Pancreas (tissue), 10 donors: ENCODE measurements at regions of chr17 and their contacts with region 1.

Region 1: DNA sequence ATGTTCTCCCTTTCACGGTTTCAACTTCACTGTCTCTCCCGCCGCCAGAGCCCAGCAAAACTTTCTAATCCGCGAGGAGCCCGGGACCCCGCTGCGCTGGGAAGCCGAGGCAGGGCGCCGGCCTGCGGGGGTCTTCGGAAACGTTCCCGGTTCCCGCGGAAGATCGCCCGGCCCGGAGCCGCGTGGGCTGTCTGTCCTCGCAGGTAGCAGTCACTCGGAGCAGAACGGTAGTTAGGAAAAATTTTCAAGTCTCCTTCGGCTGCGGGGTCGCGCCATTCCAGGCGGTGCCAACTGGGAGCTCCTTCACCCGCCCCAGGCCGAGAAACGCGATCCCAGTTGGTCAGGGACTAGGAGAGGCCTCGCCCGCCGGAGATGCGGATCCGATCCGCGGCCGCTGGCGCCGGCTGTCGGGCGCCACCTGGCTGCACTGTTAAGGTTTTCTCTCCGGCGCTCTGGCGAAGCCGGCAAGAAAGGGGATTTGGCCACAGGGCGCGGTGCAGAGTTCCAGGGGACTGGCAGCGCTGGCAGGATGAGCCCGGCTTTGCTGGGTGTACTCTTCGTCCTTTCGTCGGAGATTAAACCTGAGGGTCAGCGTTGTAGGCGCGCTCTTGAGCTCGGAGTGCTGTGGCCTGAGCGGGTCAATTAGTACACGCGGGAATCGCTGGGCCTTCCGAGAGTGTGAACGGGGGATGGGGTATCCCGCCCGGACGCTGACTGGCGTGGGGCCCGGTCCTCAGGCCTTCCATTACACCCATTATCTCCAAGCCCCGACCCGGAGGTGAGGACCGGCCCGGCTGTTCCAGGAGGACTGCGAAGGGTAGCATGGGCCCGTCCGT is 135.4 kb downstream of the KCNJ12 start:
- DNase-seq: peak; percentile 69 to 92 (median 82)
- ATAC-seq: peak; percentile 94 to 98 (median 97)
- H3K4me3 ChIP-seq: peak overlapping the region; percentile 21 to 54 (median 32)
- H3K27ac ChIP-seq: peak overlapping the region in 3 of 4 donors; percentile 29 to 41 (median 39)
- H3K4me1 ChIP-seq: no peaks in the 10 kb centered on the region
- H3K27me3 ChIP-seq: peaks cover 0 to 3% (median 0%) of the 10 kb centered on the region in 4 donors
- CTCF ChIP-seq: peak; percentile 68 to 81 (median 76)

Region 2: DNA sequence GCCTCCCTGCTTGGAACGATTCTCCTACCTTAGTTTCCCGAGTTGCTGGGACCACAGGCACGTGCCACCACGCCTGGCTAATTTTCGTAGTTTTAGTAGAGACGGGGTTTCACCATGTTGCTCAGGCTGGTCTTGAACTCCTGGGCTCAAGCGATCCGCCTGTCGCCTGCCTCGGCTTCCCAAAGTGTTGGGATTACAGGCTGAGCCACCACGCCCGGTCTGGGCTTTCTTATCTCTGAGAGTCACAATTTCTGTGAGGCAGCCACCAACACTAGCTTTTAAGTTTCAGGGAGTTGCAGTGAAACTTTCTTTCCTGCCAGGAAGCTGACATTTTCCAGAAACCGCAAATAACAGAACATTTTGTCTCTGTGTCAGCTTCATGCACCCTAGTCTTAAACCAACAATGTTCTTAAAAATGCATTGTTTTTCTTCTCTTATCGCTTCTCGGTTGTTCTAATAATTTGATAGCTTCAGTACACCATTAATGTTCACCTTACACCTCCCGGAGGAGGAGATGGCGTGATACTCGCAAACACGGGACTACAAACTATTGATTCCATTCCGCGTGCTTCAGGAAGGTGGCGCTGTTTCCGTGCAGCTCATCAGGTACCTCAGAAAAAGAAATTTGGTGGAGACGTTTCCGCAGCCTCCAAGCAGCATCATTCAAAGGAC is 392.2 kb before region 1 on chr17:
- intact Hi-C with region 1: loop called in 1 of 3 experiments (anchors 10 kb)
- DNase-seq: peak in 5 of 6 donors; percentile 47 to 74 (median 57)
- ATAC-seq: peak; percentile 66 to 96 (median 92)
- H3K4me3 ChIP-seq: no peak overlapping the region
- H3K27ac ChIP-seq: peak overlapping the region in 1 of 4 donors; percentile 46
- H3K4me1 ChIP-seq: peaks cover 0 to 4% (median 0%) of the 10 kb centered on the region in 3 donors
- H3K27me3 ChIP-seq: no peaks in the 10 kb centered on the region
- CTCF ChIP-seq: peak; percentile 59 to 83 (median 76)

Region 3: GRCh38 chr17:21284319-21285163 is 227.0 kb before region 1 on chr17 and contains the start of gene MAP2K3:
- intact Hi-C with region 1: loop called in 1 of 3 experiments (anchors 5 kb)
- DNase-seq: peak; percentile 99
- ATAC-seq: peak; percentile 73 to 81 (median 76)
- H3K4me3 ChIP-seq: peak within 1 kb of the TSS; percentile 73 to 90 (median 84)
- H3K27ac ChIP-seq: peak within 1 kb of the TSS; percentile 80 to 99 (median 88)
- H3K4me1 ChIP-seq: peaks cover 28 to 31% (median 28%) of the 10 kb centered on the region in 3 donors
- H3K27me3 ChIP-seq: no peaks in the 10 kb centered on the region
- CTCF ChIP-seq: no peak
- total RNA-seq, gene MAP2K3: 16.4 to 25.0 (median 19.9) TPM

Region 4: GRCh38 chr17:21318439-21318838 is 193.1 kb before region 1 on chr17:
- intact Hi-C with region 1: loop called in 1 of 3 experiments (anchors 10 kb)
- DNase-seq: peak in 2 of 6 donors; percentile 28 to 75
- ATAC-seq: no peak
- H3K4me3 ChIP-seq: no peak overlapping the region
- H3K27ac ChIP-seq: no peak overlapping the region
- H3K4me1 ChIP-seq: peaks cover 0 to 5% (median 0%) of the 10 kb centered on the region in 3 donors
- H3K27me3 ChIP-seq: no peaks in the 10 kb centered on the region
- CTCF ChIP-seq: no peak

Region 5: GRCh38 chr17:21457051-21458026 is 54.2 kb before region 1 on chr17:
- intact Hi-C with region 1: loop called in 1 of 3 experiments (anchors 10 kb)
- DNase-seq: peak; percentile 85 to 98 (median 95)
- ATAC-seq: peak; percentile 95 to 98 (median 97)
- H3K4me3 ChIP-seq: no peak overlapping the region
- H3K27ac ChIP-seq: no peak overlapping the region
- H3K4me1 ChIP-seq: peaks cover 0 to 5% (median 3%) of the 10 kb centered on the region in 3 donors
- H3K27me3 ChIP-seq: peaks cover 0 to under 1% (median 0%) of the 10 kb centered on the region in 4 donors
- CTCF ChIP-seq: peak; percentile 97 to 99 (median 98)

Region 6: DNA sequence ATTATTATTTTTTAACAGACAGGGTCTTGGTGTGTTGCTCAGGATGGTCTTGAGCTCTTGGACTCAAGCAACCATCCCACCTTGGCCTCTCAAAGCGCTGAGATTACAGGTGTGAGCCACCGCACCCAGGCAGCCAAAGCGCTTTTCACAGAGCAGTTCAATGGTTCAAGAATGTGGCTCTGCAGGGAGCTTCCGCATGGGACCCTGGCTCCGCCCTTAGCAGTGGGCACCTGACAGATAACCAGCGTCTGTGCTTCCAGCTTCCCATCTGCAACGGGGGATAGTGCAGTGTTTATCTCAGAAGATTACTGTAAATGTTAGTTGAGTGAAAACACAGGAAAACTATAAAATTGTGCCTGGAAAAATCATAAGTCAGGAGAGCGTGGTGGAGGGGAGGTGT is 36.0 kb before region 1 on chr17:
- intact Hi-C with region 1: no loop called
- DNase-seq: no peak
- ATAC-seq: no peak
- H3K4me3 ChIP-seq: no peak overlapping the region
- H3K27ac ChIP-seq: no peak overlapping the region
- H3K4me1 ChIP-seq: no peaks in the 10 kb centered on the region
- H3K27me3 ChIP-seq: peaks cover 0 to 3% (median 0%) of the 10 kb centered on the region in 4 donors
- CTCF ChIP-seq: no peak